HCT116 (cell line): ENCODE measurements at regions of chr6 and their contacts with region 1.

Region 1: GRCh38 chr6:79869600-79870084 is 77.7 kb downstream of the ELOVL4 start:
- DNase-seq: peak; percentile 67
- ATAC-seq: peak; percentile 98
- H3K4me3 ChIP-seq: peak overlapping the region in 1 of 2 experiments; percentile 32; a peak in 2 of 4 replicates
- H3K27ac ChIP-seq: no peak overlapping the region
- H3K4me1 ChIP-seq: peaks cover 0 to 21% of the 10 kb centered on the region in 2 experiments; a peak in 3 of 4 replicates
- H3K27me3 ChIP-seq: no peaks in the 10 kb centered on the region
- CTCF ChIP-seq: peak; percentile 52 to 86 (median 82)
- POLR2A ChIP-seq: no peak
- RAD21 ChIP-seq: peak; percentile 65

Region 2: DNA sequence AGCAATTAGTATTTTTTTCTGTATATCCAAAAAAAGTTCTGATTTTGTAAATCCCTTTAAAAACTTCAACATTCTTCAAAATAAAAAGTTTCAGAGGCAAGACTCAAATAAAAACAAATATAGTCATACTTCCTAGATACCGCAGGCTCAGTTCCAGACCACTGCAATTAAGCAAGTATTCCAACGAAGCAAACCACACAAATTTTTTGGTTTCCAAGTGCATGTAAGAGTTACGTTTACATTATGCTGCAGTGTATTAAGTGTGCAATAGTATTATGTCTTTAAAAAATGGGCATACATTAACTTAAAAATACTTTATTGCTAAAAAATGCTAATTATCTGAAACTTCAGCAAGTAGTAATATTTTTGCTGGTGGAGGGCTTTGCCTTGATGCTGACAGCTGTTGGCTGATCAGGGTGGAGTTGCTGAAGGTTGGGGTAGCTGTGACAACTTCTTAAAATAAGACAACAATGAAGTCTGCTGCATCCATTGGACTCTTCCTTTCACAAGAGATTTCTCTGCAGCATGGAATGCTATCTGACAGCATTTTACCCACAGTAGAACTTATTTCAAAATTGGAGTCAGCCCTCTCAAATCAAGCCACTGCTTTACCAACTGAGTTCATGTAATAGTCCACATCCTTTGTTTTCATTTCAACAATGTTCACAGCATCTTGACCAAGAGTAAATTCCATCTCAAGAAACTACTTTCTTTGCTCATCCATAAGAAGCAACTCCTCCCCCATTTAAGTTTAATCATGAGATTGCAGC is 837.6 kb before region 1 on chr6:
- CTCF ChIA-PET with region 1: no interaction called
- POLR2A ChIA-PET with region 1: no interaction called
- RAD21 ChIA-PET with region 1: no interaction called
- intact Hi-C with region 1: no loop called
- DNase-seq: no peak
- ATAC-seq: no peak
- H3K4me3 ChIP-seq: no peak overlapping the region
- H3K27ac ChIP-seq: no peak overlapping the region
- H3K4me1 ChIP-seq: no peaks in the 10 kb centered on the region
- H3K27me3 ChIP-seq: no peaks in the 10 kb centered on the region
- CTCF ChIP-seq: no peak
- POLR2A ChIP-seq: no peak
- RAD21 ChIP-seq: no peak

Region 3: DNA sequence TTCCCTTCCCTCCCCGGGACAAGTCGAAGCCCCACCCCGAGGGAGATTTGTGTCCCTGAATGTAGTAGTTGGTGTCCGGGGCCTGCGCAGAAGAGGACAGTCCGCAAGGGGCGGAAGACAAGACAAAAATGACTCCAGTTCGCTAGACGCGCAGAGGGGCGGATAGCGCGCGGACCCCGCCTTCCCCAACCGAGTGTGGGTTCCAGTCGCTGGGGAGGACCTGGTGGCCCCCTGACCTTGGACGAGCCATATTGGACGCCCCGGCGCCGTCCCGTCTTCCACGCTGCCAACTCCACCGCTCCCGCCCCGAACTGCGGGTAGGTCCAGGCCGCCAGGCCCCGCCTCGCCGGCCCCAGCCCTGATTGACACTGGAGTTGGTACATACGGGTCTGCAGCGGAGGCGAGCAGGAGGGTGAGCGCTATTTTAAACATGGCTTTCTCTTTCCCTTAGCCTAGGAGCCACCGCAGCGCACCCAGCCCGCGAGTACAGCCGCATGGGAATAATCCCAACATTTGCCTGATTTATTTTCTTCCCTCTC is 636.0 kb before region 1 on chr6:
- CTCF ChIA-PET with region 1: no interaction called
- POLR2A ChIA-PET with region 1: no interaction called
- RAD21 ChIA-PET with region 1: no interaction called
- intact Hi-C with region 1: loop called (anchors 10 kb)
- DNase-seq: peak; percentile 77
- ATAC-seq: peak; percentile 86
- H3K4me3 ChIP-seq: peak overlapping the region; percentile 86 to 94
- H3K27ac ChIP-seq: peak overlapping the region; percentile 73
- H3K4me1 ChIP-seq: peaks cover 4 to 8% of the 10 kb centered on the region in 2 experiments; a peak in 2 of 4 replicates
- H3K27me3 ChIP-seq: no peaks in the 10 kb centered on the region
- CTCF ChIP-seq: peak in 2 of 3 experiments; percentile 33 to 35; a peak in 4 of 6 replicates
- POLR2A ChIP-seq: no peak
- RAD21 ChIP-seq: no peak

Region 4: GRCh38 chr6:79570129-79571029 is 299.3 kb before region 1 on chr6:
- CTCF ChIA-PET with region 1: interaction called, 6 read pairs
- POLR2A ChIA-PET with region 1: no interaction called
- RAD21 ChIA-PET with region 1: no interaction called
- intact Hi-C with region 1: loop called (anchors 2 kb)
- DNase-seq: peak; percentile 80
- ATAC-seq: peak; percentile 81
- H3K4me3 ChIP-seq: peak overlapping the region in 1 of 2 experiments; percentile 40; a peak in 2 of 4 replicates
- H3K27ac ChIP-seq: peak overlapping the region; percentile 38; the same call in 1 of the 2 replicates
- H3K4me1 ChIP-seq: peaks cover 28 to 40% of the 10 kb centered on the region in 2 experiments
- H3K27me3 ChIP-seq: no peaks in the 10 kb centered on the region
- CTCF ChIP-seq: peak; percentile 55 to 80 (median 74)
- POLR2A ChIP-seq: no peak
- RAD21 ChIP-seq: peak; percentile 79

Region 5: GRCh38 chr6:79672631-79673111 is 197.0 kb before region 1 on chr6:
- CTCF ChIA-PET with region 1: interaction called, 3 read pairs
- POLR2A ChIA-PET with region 1: no interaction called
- RAD21 ChIA-PET with region 1: no interaction called
- intact Hi-C with region 1: loop called (anchors 2 kb)
- DNase-seq: peak; percentile 32
- ATAC-seq: peak; percentile 62
- H3K4me3 ChIP-seq: no peak overlapping the region
- H3K27ac ChIP-seq: no peak overlapping the region
- H3K4me1 ChIP-seq: peaks cover 14 to 23% of the 10 kb centered on the region in 2 experiments
- H3K27me3 ChIP-seq: no peaks in the 10 kb centered on the region
- CTCF ChIP-seq: peak; percentile 58 to 81 (median 59); a peak in 5 of 6 replicates
- POLR2A ChIP-seq: no peak
- RAD21 ChIP-seq: peak; percentile 86

Region 6: DNA sequence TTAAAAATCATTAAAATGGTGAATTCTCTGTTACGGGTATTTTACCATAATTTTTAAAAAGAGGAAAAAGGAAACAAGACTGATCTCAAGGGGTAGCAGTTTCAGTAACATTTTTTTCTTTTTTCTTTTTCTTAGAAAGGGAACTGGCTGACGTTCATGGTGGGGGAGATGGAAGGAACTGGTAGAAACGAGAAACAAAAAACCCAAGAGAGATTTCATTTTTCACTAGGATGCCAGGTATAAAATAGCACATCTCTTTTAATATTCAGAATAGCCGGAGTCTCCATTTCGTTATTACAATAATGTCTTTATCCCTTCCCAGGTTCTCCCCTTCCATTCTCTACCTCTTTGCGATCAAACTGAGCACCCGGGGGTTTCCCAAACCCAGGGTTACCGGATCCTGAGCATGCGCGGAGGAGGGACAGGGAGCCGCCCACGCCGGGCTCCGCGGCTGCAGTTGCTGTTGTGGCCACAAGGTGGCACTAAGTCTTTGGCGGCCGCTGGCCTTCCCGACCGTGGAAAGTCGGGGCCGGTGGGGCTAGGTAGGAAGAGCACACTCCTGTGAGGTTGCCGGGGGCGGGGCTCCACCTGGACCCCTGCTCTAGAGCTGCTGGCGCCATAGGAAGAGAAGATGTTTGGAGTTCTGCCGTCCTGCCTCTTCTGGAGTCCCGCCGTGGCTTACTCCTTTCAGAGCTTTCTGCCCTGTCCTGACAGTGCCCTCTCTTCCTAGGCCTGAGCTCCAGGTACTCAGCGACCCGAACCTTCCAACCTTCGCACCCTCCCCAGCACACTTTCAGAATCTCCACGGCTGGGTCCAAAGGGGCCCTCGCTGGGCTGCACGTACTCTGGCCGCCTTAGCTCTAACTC is 91.7 kb before region 1 on chr6:
- CTCF ChIA-PET with region 1: interaction called, 42 read pairs
- POLR2A ChIA-PET with region 1: no interaction called
- RAD21 ChIA-PET with region 1: interaction called in 1 of 2 experiments, 3 read pairs
- intact Hi-C with region 1: loop called (anchors 1 kb)
- DNase-seq: peak; percentile 43
- ATAC-seq: peak; percentile 94
- H3K4me3 ChIP-seq: peak overlapping the region; percentile 26 to 50
- H3K27ac ChIP-seq: no peak overlapping the region
- H3K4me1 ChIP-seq: peaks cover 0 to 11% of the 10 kb centered on the region in 2 experiments; a peak in 1 of 4 replicates
- H3K27me3 ChIP-seq: no peaks in the 10 kb centered on the region
- CTCF ChIP-seq: peak; percentile 74 to 98 (median 95)
- POLR2A ChIP-seq: no peak
- RAD21 ChIP-seq: peak; percentile 83

Region 7: GRCh38 chr6:79954849-79955248 is 85.2 kb after region 1 on chr6:
- CTCF ChIA-PET with region 1: no interaction called
- POLR2A ChIA-PET with region 1: no interaction called
- RAD21 ChIA-PET with region 1: no interaction called
- intact Hi-C with region 1: no loop called
- DNase-seq: no peak
- ATAC-seq: no peak
- H3K4me3 ChIP-seq: no peak overlapping the region
- H3K27ac ChIP-seq: no peak overlapping the region
- H3K4me1 ChIP-seq: no peaks in the 10 kb centered on the region
- H3K27me3 ChIP-seq: no peaks in the 10 kb centered on the region
- CTCF ChIP-seq: no peak
- POLR2A ChIP-seq: no peak
- RAD21 ChIP-seq: no peak

Region 8: GRCh38 chr6:80094017-80094416 is 224.4 kb after region 1 on chr6:
- CTCF ChIA-PET with region 1: interaction called, 4 read pairs
- POLR2A ChIA-PET with region 1: no interaction called
- RAD21 ChIA-PET with region 1: interaction called in 1 of 2 experiments, 4 read pairs
- intact Hi-C with region 1: loop called (anchors 1 kb)
- DNase-seq: peak; percentile 6
- ATAC-seq: 0 out of 2 replicates have a peak, but pooled peaks have one; percentile 44
- H3K4me3 ChIP-seq: no peak overlapping the region
- H3K27ac ChIP-seq: no peak overlapping the region
- H3K4me1 ChIP-seq: no peaks in the 10 kb centered on the region
- H3K27me3 ChIP-seq: no peaks in the 10 kb centered on the region
- CTCF ChIP-seq: peak; percentile 22 to 71 (median 59); a peak in 5 of 6 replicates
- POLR2A ChIP-seq: no peak
- RAD21 ChIP-seq: peak; percentile 75